Activated CD4-positive, alpha-beta memory T cell treated with anti-CD3 and anti-CD28 coated beads for 36 hours (primary cell): ENCODE measurements at regions of chr15 and their contacts with region 1.

Region 1: DNA sequence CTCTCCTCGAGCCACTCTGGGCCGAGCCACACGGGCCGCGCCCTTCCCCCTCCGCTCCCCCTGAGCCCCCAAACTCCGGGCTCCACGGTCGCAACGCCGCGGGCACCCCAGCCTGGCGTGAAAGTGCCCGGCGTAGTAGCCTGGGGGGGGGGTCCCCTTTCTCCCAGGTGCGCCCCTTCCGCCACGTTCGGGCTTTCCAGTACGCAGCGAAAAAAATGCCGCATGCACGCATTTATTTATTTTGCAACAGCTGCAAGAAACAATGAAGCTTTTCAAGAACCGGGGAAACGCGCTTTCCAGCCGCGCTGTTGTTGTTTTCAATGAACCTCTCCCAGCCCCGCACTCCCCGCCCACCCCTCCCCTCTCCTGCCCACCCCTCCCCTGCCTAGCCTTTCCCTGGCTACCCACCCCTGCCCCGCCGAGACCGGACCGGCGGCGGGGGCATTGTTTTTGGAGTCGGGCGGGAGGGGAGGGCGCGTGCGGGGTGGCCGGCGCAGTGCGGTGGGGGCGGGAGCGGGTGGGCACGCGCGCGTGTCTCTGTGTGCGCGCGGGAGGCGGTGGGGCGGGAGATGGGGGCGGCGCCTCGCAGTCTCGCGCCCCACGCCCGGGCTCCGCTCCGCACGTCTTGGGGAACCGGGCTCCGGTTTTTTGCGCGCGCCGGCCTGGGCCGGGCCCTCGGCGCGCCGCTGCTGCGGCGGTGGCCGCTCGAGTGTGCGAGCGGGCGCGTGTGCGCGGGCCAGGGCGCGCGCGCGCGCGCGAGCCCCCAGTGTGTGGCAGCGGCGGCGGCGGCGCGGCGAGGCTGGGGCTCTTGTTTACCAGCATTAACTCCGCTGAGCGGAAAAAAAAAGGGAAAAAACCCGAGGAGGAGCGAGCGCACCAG is at the start of gene IGF1R:
- DNase-seq: peak; percentile 86
- H3K4me3 Mint-ChIP-seq: peak within 1 kb of the TSS; percentile 77
- H3K27ac Mint-ChIP-seq: peak within 1 kb of the TSS; percentile 81
- H3K4me1 Mint-ChIP-seq: peaks cover 22% of the 10 kb centered on the region
- H3K27me3 Mint-ChIP-seq: peaks cover 33% of the 10 kb centered on the region
- total RNA-seq, gene IGF1R: 13.2 to 14.8 TPM

Region 2: DNA sequence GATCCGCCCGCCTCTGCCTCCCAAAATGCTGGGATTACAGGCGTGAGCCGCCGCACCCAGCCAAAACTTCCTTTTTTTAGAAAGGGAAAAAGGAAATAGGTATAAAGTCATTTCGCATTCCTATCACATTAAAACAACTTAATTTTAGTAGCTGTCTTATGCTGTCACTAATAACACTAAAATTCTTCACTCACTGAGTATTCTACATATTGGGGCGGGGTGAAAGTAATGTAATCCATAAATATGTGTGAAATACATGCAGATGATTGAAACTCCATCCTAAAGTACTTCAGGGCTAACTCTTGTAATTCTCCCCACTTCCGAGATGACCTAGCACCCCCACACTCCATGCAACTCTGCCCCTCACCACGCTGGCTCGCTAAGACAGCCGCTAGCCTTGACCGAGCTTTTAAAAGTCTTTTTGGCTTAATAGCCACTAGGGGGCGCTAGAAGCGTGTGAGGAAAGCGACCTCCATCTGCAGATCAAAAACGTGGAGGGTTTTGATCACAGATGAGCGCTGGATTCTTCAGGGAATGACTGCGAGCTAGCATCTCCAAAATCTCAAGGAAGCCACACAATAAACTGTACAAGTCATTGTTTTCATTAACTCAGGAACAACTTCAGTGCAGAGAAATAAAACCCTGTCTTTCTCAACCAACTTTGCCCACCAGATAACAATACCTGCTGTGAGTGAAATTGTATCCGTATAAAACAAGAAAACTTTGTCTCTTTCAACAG is 129.0 kb before region 1 on chr15:
- CTCF ChIA-PET with region 1: interaction called, 39 read pairs
- POLR2A ChIA-PET with region 1: interaction called, 4 read pairs
- intact Hi-C with region 1: loop called (anchors 1 kb)
- DNase-seq: peak; percentile 56
- H3K4me3 Mint-ChIP-seq: no peak overlapping the region
- H3K27ac Mint-ChIP-seq: no peak overlapping the region
- H3K4me1 Mint-ChIP-seq: peaks cover 4% of the 10 kb centered on the region
- H3K27me3 Mint-ChIP-seq: peaks cover 4% of the 10 kb centered on the region

Region 3: GRCh38 chr15:98599909-98600691 is 47.9 kb before region 1 on chr15:
- CTCF ChIA-PET with region 1: no interaction called
- POLR2A ChIA-PET with region 1: no interaction called
- intact Hi-C with region 1: loop called (anchors 5 kb)
- DNase-seq: peak; percentile 46
- H3K4me3 Mint-ChIP-seq: peak overlapping the region; percentile 78
- H3K27ac Mint-ChIP-seq: peak overlapping the region; percentile 84
- H3K4me1 Mint-ChIP-seq: peaks cover 13% of the 10 kb centered on the region
- H3K27me3 Mint-ChIP-seq: peaks cover 2% of the 10 kb centered on the region

Region 4: GRCh38 chr15:98668566-98669308 is 20.7 kb after region 1 on chr15:
- CTCF ChIA-PET with region 1: no interaction called
- POLR2A ChIA-PET with region 1: interaction called, 3 read pairs
- intact Hi-C with region 1: loop called (anchors 1 kb)
- DNase-seq: peak; percentile 77
- H3K4me3 Mint-ChIP-seq: no peak overlapping the region
- H3K27ac Mint-ChIP-seq: peak overlapping the region; percentile 36
- H3K4me1 Mint-ChIP-seq: peaks cover 39% of the 10 kb centered on the region
- H3K27me3 Mint-ChIP-seq: no peaks in the 10 kb centered on the region

Region 5: DNA sequence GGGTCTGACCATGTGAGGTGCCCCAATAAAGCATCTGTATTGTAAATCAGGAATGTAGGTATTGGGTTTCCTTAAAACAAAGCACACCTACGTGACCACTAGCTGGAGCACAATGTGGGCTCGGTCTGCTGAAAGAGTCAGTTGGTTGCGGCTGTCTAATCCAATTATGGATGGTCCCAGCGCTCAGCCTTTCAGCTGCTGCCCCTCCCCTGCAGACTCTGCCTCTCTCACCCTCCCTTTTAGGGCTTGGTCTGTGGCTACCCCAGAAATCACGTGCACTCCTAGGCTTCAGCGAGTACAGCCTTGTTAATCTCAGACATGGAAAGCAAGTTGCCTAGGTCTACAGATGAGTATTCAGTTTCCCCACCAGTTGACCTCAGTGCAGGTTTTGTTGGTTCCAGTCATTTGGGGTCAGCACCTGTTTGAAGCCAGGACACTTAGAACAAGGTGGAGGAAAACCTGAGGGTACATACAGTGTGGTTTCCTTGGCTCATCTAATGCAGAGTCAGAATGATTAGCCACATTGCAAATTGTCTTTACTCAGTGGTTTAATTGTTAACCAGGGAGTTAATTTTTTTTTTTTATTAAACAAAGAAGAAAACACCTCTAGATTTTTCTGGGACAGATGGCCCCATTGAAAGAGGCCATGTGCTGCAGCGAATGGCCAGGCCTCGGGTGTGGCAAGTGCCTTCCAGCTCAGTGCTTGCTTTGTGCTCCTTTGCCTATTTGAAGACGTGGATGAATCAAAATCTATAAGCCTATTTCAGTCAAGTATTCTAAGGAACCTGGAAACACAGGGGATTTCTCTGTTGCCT is 138.0 kb after region 1 on chr15:
- CTCF ChIA-PET with region 1: no interaction called
- POLR2A ChIA-PET with region 1: no interaction called
- intact Hi-C with region 1: loop called (anchors 5 kb)
- DNase-seq: peak; percentile 36
- H3K4me3 Mint-ChIP-seq: no peak overlapping the region
- H3K27ac Mint-ChIP-seq: no peak overlapping the region
- H3K4me1 Mint-ChIP-seq: peaks cover 36% of the 10 kb centered on the region
- H3K27me3 Mint-ChIP-seq: peaks cover 2% of the 10 kb centered on the region

Region 6: GRCh38 chr15:98865397-98866339 is 217.7 kb after region 1 on chr15:
- CTCF ChIA-PET with region 1: no interaction called
- POLR2A ChIA-PET with region 1: no interaction called
- intact Hi-C with region 1: loop called (anchors 5 kb)
- DNase-seq: peak; percentile 82
- H3K4me3 Mint-ChIP-seq: peak overlapping the region; percentile 76
- H3K27ac Mint-ChIP-seq: peak overlapping the region; percentile 86
- H3K4me1 Mint-ChIP-seq: peaks cover 22% of the 10 kb centered on the region
- H3K27me3 Mint-ChIP-seq: no peaks in the 10 kb centered on the region